ENCODE measurements at regions of chr12 and their contacts with region 1.

Region 1: GRCh38 chr12:103819312-103819711 is 21.7 kb downstream of the NT5DC3 start:
- DNase-seq: no peak
- ATAC-seq: no peak
- H3K4me3 ChIP-seq: no peak overlapping the region
- H3K27ac ChIP-seq: no peak overlapping the region
- H3K4me1 ChIP-seq: no peaks in the 10 kb centered on the region
- H3K27me3 ChIP-seq: no peaks in the 10 kb centered on the region
- CTCF ChIP-seq: no peak
- EP300 ChIP-seq: no peak
- POLR2A ChIP-seq: no peak
- RAD21 ChIP-seq: no peak

Region 2: GRCh38 chr12:103833891-103834290 is 14.6 kb after region 1 on chr12:
- CTCF ChIA-PET with region 1: interaction called, 14 read pairs
- POLR2A ChIA-PET with region 1: interaction called, 4 read pairs
- RAD21 ChIA-PET with region 1: interaction called, 3 read pairs
- SMC1A ChIA-PET with region 1: interaction called, 6 read pairs
- in situ Hi-C with region 1: no loop called
- intact Hi-C with region 1: no loop called
- DNase-seq: no peak
- ATAC-seq: peak; percentile 44
- H3K4me3 ChIP-seq: no peak overlapping the region
- H3K27ac ChIP-seq: no peak overlapping the region
- H3K4me1 ChIP-seq: peaks cover 6% of the 10 kb centered on the region; the same call in 1 of the 2 replicates
- H3K27me3 ChIP-seq: no peaks in the 10 kb centered on the region
- CTCF ChIP-seq: peak in 2 of 3 experiments; percentile 3 to 19; a peak in 2 of 6 replicates
- EP300 ChIP-seq: no peak
- POLR2A ChIP-seq: no peak
- RAD21 ChIP-seq: no peak

Measured in GM12878 (cell line).